Heart right ventricle (tissue), 16 donors: ENCODE measurements at regions of chr20 and their contacts with region 1.

Region 1: GRCh38 chr20:35092524-35093266 is at the start of gene TRPC4AP:
- DNase-seq: peak; percentile 88 to 92
- ATAC-seq: peak; percentile 93 to 97 (median 96)
- H3K4me3 ChIP-seq: peak within 1 kb of the TSS; percentile 62 to 96 (median 88)
- H3K27ac ChIP-seq: peak within 1 kb of the TSS; percentile 84 to 97 (median 94)
- H3K4me1 ChIP-seq: peaks cover 9 to 62% (median 31%) of the 10 kb centered on the region in 9 donors
- H3K27me3 ChIP-seq: no peaks in the 10 kb centered on the region
- CTCF ChIP-seq: peak; percentile 95 to 99 (median 98)
- total RNA-seq, gene TRPC4AP: 32.2 to 46.4 (median 38.5) TPM

Region 2: DNA sequence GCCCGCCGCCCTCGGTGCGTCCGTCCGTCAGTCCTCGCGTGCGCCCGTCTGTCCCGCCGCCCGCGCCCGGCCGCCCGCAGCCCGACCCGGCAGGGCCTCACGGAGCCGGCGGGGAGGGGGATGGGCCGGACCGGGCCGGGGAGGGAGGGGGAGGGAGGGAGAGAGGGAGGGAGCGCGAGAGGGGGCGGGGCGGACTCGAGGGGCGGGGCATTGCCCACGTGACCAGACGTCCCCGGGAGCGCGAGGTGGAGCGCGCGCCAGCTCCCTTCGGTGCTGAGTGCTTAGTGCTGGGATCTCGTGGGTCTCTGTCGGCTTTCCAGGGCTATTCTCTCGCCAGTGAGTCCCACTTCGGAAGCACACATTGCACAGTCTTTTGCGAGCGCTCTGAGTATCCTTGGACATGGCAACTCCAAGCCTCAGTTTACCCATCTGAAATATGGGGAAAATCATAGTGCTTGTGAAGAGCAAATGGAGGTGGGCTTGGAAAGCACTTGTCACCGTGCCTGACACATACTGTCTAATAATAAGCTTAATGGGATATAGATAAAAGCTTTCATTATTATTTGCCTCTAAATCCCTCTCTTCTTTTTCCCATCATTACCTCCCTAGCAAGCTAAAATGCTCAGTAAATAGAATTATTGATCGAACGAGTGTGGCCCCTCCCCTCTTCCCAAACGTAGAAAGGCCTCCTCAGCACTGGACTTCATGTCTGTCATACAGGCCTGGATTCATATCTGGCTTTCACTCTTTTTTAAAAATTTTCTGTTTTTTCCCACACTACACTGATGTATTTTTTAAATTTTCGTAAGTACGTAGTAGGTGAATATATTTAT is 266.9 kb before region 1 on chr20 and contains the start of gene NCOA6:
- intact Hi-C with region 1: loop called in 1 of 10 experiments (anchors 10 kb)
- DNase-seq: peak; percentile 87 to 92
- ATAC-seq: peak; percentile 89 to 94 (median 91)
- H3K4me3 ChIP-seq: peak within 1 kb of the TSS; percentile 67 to 98 (median 92)
- H3K27ac ChIP-seq: peak within 1 kb of the TSS; percentile 85 to 97 (median 93)
- H3K4me1 ChIP-seq: peaks cover 3 to 47% (median 28%) of the 10 kb centered on the region in 9 donors
- H3K27me3 ChIP-seq: no peaks in the 10 kb centered on the region
- CTCF ChIP-seq: no peak
- total RNA-seq, gene NCOA6: 15.5 to 19.7 (median 18.0) TPM

Region 3: DNA sequence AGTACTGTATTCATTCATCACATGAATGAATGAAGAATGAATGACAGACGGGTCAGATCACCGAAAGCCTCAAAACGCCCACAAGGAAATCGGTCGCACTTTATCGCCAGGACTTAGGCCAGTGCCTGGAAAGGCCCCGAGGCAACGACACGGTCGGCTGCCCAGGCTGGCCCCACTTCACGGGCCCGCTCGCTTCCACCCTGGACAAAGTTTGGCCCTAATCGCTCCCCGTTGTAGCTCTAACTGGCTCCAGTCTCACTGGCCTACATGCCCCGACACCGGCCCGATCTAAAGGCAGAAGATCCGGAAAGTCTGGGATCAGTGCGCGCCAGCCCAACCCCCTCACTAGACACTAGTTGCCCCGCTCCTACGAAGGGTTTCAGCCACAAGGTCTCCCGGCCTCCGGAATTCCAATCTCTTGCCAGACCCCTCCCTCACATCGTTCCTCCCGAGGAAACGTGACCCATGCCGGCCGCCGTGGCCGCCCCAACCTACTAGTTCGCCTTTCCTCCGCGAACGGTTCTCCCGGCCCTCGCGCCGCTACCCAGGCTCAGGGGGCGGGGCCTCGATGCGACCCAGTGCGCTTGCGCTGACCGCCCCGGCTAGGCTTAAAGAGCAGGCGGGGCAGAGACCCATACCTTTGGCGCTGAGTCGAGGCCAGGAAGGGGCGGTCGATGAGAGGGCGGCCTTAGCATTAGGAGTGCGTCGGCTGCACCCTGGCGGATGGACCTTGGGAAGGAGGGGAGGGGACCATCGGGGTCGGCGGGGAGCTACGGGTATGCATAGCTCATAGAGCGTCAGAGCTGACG is 137.3 kb before region 1 on chr20 and contains the starts of genes GSS and MYH7B:
- intact Hi-C with region 1: loop called in 1 of 10 experiments (anchors 2 kb)
- DNase-seq: peak; percentile 97 to 99
- ATAC-seq: peak; percentile 95 to 98 (median 97)
- H3K4me3 ChIP-seq: peak within 1 kb of the TSS; percentile 33 to 76 (median 63)
- H3K27ac ChIP-seq: peak within 1 kb of the TSS; percentile 77 to 98 (median 92)
- H3K4me1 ChIP-seq: peaks cover under 1 to 52% (median 24%) of the 10 kb centered on the region in 9 donors
- H3K27me3 ChIP-seq: no peaks in the 10 kb centered on the region
- CTCF ChIP-seq: peak in 7 of 9 donors; percentile 39 to 75 (median 56)
- total RNA-seq, gene GSS: 20.0 to 33.2 (median 24.7) TPM
- total RNA-seq, gene MYH7B: 117 to 318 (median 182) TPM

Region 4: DNA sequence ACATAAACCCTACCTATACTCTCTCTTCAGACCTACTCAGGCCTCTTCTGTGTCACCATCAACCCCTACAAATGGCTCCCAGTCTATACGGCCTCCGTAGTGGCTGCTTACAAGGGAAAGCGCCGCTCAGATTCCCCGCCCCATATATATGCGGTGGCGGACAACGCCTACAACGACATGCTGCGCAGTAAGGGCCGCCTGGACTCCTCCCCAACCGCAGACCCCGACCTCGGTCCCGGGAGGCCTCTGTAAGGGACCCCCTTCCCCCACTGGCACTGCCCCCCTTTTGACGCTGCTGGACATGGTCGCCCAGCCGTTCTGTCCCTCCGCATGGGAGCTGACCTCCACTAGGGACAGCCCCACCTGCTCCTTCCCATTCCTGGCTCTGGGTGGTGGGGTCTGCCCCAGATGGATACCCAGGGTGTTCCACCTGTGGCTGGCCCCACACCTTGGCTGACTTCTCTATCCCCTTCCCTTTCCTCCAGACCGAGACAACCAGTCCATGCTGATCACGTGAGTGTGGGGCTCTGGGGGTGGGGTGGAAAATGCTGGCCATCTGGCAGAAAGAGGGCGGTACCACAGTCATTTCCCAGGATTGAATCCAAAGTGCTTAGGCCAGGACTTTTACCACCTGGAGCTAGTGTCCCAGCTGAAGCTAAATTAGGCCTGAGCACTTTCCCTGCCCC is 112.0 kb before region 1 on chr20:
- intact Hi-C with region 1: no loop called
- DNase-seq: peak; percentile 53 to 77
- ATAC-seq: peak; percentile 5 to 50 (median 30)
- H3K4me3 ChIP-seq: peak overlapping the region in 9 of 10 donors; percentile 6 to 65 (median 57)
- H3K27ac ChIP-seq: peak overlapping the region; percentile 31 to 98 (median 68)
- H3K4me1 ChIP-seq: peaks cover 8 to 67% (median 28%) of the 10 kb centered on the region in 9 donors
- H3K27me3 ChIP-seq: peaks cover 0 to 17% (median 0%) of the 10 kb centered on the region in 7 donors
- CTCF ChIP-seq: peak in 1 of 9 donors; percentile 9

Region 5: DNA sequence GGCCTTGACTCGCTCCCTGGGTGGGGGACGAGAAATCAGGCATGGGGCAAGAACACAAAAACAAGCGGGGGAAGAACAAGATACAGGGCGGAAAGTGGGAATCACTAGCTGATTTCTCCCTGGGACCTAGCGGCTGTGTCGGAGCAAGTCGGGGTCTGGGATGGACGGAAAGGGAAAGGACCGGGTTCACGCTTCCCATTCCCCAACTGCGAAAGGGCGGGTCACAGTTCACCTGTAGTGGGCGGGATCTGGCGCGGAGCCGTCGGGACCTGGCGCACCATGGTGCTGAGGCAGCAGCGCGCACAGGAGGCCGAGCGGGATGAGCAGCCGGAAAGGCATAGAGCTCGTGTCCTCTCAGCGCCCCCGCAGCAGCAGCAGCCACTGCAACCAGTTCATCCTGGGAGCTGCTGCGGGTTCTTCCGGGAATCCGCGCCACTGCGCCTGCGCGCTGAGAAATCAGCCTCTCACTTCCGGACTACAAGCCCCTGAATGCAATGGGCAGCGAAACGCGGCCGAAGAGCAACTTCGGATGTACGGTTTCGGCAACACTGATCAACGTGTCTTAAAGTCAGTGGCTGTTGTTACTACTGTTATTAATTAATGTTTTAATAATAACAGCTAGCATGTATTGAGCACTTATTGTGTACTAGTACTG is 54.4 kb after region 1 on chr20 and contains the start of gene EDEM2:
- intact Hi-C with region 1: loop called in 3 of 10 experiments (anchors 2 to 5 kb)
- DNase-seq: peak; percentile 94 to 97
- ATAC-seq: peak; percentile 95 to 98 (median 96)
- H3K4me3 ChIP-seq: peak within 1 kb of the TSS; percentile 65 to 98 (median 86)
- H3K27ac ChIP-seq: peak within 1 kb of the TSS in 9 of 10 donors; percentile 74 to 88 (median 79)
- H3K4me1 ChIP-seq: peaks cover 6 to 44% (median 27%) of the 10 kb centered on the region in 9 donors
- H3K27me3 ChIP-seq: no peaks in the 10 kb centered on the region
- CTCF ChIP-seq: peak in 1 of 9 donors; percentile 7
- total RNA-seq, gene EDEM2: 7.2 to 26.1 (median 11.0) TPM

Region 6: GRCh38 chr20:35269055-35269781 is 176.5 kb after region 1 on chr20:
- intact Hi-C with region 1: loop called in 1 of 10 experiments (anchors 10 kb)
- DNase-seq: peak; percentile 52 to 63
- ATAC-seq: peak; percentile 43 to 76 (median 70)
- H3K4me3 ChIP-seq: no peak overlapping the region
- H3K27ac ChIP-seq: no peak overlapping the region
- H3K4me1 ChIP-seq: peaks cover 0 to 16% (median under 1%) of the 10 kb centered on the region in 9 donors
- H3K27me3 ChIP-seq: no peaks in the 10 kb centered on the region
- CTCF ChIP-seq: peak; percentile 43 to 78 (median 72)